H1 (cell line): ENCODE measurements at regions of chr13 and their contacts with region 1.

Region 1: DNA sequence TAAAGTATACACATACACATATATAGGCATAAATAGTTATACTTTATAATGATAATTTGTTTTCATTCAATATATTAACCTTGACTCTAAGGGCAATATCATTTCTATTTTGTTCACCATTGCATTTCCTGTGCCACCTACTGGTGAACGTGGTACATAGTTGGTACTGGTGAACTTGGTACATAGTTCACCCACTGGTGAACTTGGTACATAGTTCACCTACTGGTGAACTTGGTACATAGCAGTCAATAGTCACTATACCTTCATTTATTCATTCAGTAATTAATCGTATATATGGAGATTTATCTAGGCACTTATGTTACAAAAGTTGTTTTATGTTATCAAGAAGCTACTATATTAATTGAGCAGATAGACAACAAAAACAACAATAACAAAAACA is 172.6 kb upstream of the ATXN8OS start:
- DNase-seq: no peak
- H3K4me3 ChIP-seq: no peak overlapping the region
- H3K27ac ChIP-seq: no peak overlapping the region
- H3K4me1 ChIP-seq: no peaks in the 10 kb centered on the region; a peak in 1 of 7 replicates
- H3K27me3 ChIP-seq: no peaks in the 10 kb centered on the region
- CTCF ChIP-seq: peak in 2 of 3 experiments; percentile 55 to 70; a peak in 3 of 4 replicates
- EP300 ChIP-seq: no peak
- POLR2A ChIP-seq: no peak
- RAD21 ChIP-seq: peak; percentile 35 to 42; a peak in 3 of 4 replicates

Region 2: DNA sequence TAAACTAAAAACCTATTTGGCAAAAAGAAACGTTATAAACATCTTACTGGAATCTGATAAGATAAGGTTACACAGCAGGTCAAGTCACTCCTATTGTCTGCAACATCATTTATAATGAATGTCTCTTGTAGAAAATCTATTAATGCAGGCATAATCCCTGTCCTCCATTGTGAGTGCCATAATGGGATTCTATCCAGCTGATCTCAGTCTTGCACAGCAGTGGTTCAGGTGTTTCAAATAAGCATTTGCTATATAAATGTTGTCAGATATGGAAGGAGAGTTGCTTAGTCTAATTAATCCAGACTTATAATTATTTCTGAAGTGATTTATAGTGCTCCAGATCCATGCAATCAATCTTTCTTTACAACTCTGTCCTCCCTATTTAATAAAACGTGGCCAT is 13.9 kb before region 1 on chr13:
- CTCF ChIA-PET with region 1: interaction called, 10 read pairs
- POLR2A ChIA-PET with region 1: no interaction called
- DNase-seq: no peak
- H3K4me3 ChIP-seq: no peak overlapping the region
- H3K27ac ChIP-seq: no peak overlapping the region
- H3K4me1 ChIP-seq: no peaks in the 10 kb centered on the region
- H3K27me3 ChIP-seq: no peaks in the 10 kb centered on the region
- CTCF ChIP-seq: no peak
- EP300 ChIP-seq: no peak
- POLR2A ChIP-seq: no peak
- RAD21 ChIP-seq: no peak

Region 3: DNA sequence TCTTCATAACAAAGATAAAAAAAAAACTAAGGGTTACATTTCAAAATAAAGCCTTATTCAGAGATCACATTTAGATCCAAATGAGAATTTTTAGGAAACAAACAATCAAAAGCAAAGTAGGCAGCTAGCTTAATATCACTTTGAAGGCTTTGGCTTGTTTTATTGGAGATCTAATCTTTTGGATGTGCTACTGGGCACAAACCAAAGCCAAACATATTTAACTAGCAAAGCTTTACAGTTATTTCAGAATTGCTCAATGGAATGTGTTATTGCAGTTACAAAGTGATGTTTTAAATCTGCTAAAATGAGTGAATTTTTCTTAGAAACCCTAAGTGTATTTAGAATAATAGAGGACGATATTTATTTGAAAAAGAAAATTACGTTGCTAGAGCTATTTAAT is 287.9 kb after region 1 on chr13:
- CTCF ChIA-PET with region 1: no interaction called
- POLR2A ChIA-PET with region 1: no interaction called
- DNase-seq: no peak
- H3K4me3 ChIP-seq: no peak overlapping the region
- H3K27ac ChIP-seq: no peak overlapping the region
- H3K4me1 ChIP-seq: no peaks in the 10 kb centered on the region
- H3K27me3 ChIP-seq: no peaks in the 10 kb centered on the region
- CTCF ChIP-seq: no peak
- EP300 ChIP-seq: no peak
- POLR2A ChIP-seq: no peak
- RAD21 ChIP-seq: no peak